GM12878 (cell line): ENCODE measurements at regions of chr10 and their contacts with region 1.

Region 1: GRCh38 chr10:102678842-102679289 is 34.6 kb downstream of the TRIM8 start:
- DNase-seq: no peak
- ATAC-seq: peak; percentile 82
- H3K4me3 ChIP-seq: no peak overlapping the region
- H3K27ac ChIP-seq: no peak overlapping the region
- H3K4me1 ChIP-seq: peaks cover 26% of the 10 kb centered on the region
- H3K27me3 ChIP-seq: no peaks in the 10 kb centered on the region
- CTCF ChIP-seq: peak; percentile 50 to 85 (median 74)
- EP300 ChIP-seq: no peak
- POLR2A ChIP-seq: no peak
- RAD21 ChIP-seq: peak; percentile 57

Region 2: GRCh38 chr10:102503281-102504220 is 175.3 kb before region 1 on chr10 and contains the start of gene SUFU:
- CTCF ChIA-PET with region 1: interaction called, 20 read pairs
- POLR2A ChIA-PET with region 1: interaction called, 4 read pairs
- RAD21 ChIA-PET with region 1: interaction called, 9 read pairs
- SMC1A ChIA-PET with region 1: interaction called, 4 read pairs
- in situ Hi-C with region 1: no loop called
- intact Hi-C with region 1: no loop called
- DNase-seq: peak; percentile 93
- ATAC-seq: peak; percentile 82
- H3K4me3 ChIP-seq: peak within 1 kb of the TSS; percentile 88
- H3K27ac ChIP-seq: peak within 1 kb of the TSS; percentile 72; the same call in 1 of the 2 replicates
- H3K4me1 ChIP-seq: peaks cover 7% of the 10 kb centered on the region
- H3K27me3 ChIP-seq: no peaks in the 10 kb centered on the region
- CTCF ChIP-seq: peak; percentile 82 to 98 (median 89); a peak in 5 of 6 replicates
- EP300 ChIP-seq: no peak
- POLR2A ChIP-seq: peak; percentile 92
- RAD21 ChIP-seq: peak; percentile 88
- polyA plus RNA-seq, gene SUFU: 0.68 to 0.84 TPM

Region 3: DNA sequence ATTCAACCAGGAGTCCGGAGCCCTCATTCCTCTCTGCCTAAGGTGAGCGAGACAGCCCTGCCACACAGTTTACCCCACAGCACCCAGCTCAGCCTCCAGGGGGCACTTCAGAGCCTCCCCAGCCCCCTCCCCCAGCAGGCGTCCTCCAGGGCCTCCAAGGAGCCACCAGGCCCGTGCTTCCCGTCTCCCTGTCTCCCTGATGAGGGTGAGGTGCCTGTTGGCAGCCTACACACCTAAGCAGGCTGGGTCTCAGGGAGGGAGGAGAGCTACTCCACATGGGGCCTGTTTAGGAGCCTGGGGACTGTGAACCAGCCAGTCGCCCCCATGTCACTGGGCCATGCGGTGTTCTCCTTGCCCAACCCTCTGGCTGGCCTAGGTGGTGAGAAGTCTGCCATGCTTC is 63.5 kb before region 1 on chr10:
- CTCF ChIA-PET with region 1: interaction called, 15 read pairs
- POLR2A ChIA-PET with region 1: no interaction called
- RAD21 ChIA-PET with region 1: interaction called, 3 read pairs
- SMC1A ChIA-PET with region 1: interaction called, 3 read pairs
- in situ Hi-C with region 1: no loop called
- intact Hi-C with region 1: no loop called
- DNase-seq: no peak
- ATAC-seq: peak; percentile 76
- H3K4me3 ChIP-seq: no peak overlapping the region
- H3K27ac ChIP-seq: no peak overlapping the region
- H3K4me1 ChIP-seq: 0 out of 2 replicates have a peak, but pooled peaks cover 3% of the 10 kb centered on the region
- H3K27me3 ChIP-seq: no peaks in the 10 kb centered on the region
- CTCF ChIP-seq: peak; percentile 17 to 35 (median 23); a peak in 3 of 6 replicates
- EP300 ChIP-seq: no peak
- POLR2A ChIP-seq: no peak
- RAD21 ChIP-seq: 0 out of 2 replicates have a peak, but pooled peaks have one; percentile 2

Region 4: DNA sequence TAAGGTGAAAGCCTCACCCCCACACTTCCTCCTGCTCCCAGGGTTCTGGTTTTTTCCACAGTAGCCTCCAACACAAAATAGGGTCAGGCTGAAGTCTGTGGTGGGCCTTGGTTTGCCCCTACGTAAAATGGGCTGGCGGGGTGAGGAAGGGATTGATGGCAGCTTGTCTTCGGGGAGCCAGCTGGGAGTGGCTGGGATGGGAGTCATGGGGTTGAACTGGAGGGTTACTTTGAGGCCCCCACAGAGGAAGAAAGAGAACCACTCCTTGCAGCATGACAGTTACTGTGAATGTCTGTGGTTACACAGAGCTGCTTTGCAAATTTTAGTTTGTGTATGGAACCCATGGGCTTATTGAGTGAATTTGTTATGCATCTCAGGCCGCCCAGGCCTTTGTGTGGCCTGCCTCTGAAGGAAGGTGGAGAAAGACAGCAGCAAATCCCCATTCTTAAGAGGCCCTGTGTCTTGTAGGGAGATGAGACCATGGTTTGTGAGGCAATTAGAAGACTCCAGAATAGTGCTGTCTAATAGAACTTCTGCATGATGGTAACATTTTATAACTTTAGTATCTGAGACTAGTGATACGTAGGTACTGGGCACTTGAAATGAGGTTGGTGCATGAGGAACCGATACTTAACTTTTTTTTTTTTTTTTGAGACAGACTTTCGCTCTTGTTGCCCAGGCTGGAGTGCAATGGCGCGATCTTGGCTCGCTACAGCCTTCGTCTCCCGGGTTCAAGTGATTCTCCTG is 26.5 kb before region 1 on chr10:
- CTCF ChIA-PET with region 1: interaction called, 128 read pairs
- POLR2A ChIA-PET with region 1: interaction called, 151 read pairs
- RAD21 ChIA-PET with region 1: interaction called, 81 read pairs
- SMC1A ChIA-PET with region 1: interaction called, 103 read pairs
- in situ Hi-C with region 1: no loop called
- intact Hi-C with region 1: no loop called
- DNase-seq: peak; percentile 75
- ATAC-seq: peak; percentile 61
- H3K4me3 ChIP-seq: peak overlapping the region; percentile 62
- H3K27ac ChIP-seq: peak overlapping the region; percentile 96
- H3K4me1 ChIP-seq: peaks cover 56% of the 10 kb centered on the region
- H3K27me3 ChIP-seq: no peaks in the 10 kb centered on the region
- CTCF ChIP-seq: no peak
- EP300 ChIP-seq: peak in 1 of 2 experiments; percentile 44; a peak in 2 of 4 replicates
- POLR2A ChIP-seq: no peak
- RAD21 ChIP-seq: no peak

Region 5: GRCh38 chr10:102691285-102692066 is 12.6 kb after region 1 on chr10:
- CTCF ChIA-PET with region 1: interaction called, 4 read pairs
- POLR2A ChIA-PET with region 1: interaction called, 4 read pairs
- RAD21 ChIA-PET with region 1: interaction called, 3 read pairs
- SMC1A ChIA-PET with region 1: interaction called, 32 read pairs
- in situ Hi-C with region 1: no loop called
- intact Hi-C with region 1: no loop called
- DNase-seq: no peak
- ATAC-seq: no peak
- H3K4me3 ChIP-seq: no peak overlapping the region
- H3K27ac ChIP-seq: no peak overlapping the region
- H3K4me1 ChIP-seq: no peaks in the 10 kb centered on the region
- H3K27me3 ChIP-seq: no peaks in the 10 kb centered on the region
- CTCF ChIP-seq: no peak
- EP300 ChIP-seq: no peak
- POLR2A ChIP-seq: no peak
- RAD21 ChIP-seq: no peak

Region 6: GRCh38 chr10:102713814-102714620 is 35.2 kb after region 1 on chr10 and contains the start of gene ARL3:
- CTCF ChIA-PET with region 1: interaction called, 114 read pairs
- POLR2A ChIA-PET with region 1: interaction called, 19 read pairs
- RAD21 ChIA-PET with region 1: interaction called, 140 read pairs
- SMC1A ChIA-PET with region 1: interaction called, 140 read pairs
- in situ Hi-C with region 1: no loop called
- intact Hi-C with region 1: loop called (anchors 2 kb)
- DNase-seq: peak; percentile 94
- ATAC-seq: peak; percentile 84
- H3K4me3 ChIP-seq: peak within 1 kb of the TSS; percentile 92
- H3K27ac ChIP-seq: peak within 1 kb of the TSS; percentile 88
- H3K4me1 ChIP-seq: peaks cover 17% of the 10 kb centered on the region
- H3K27me3 ChIP-seq: no peaks in the 10 kb centered on the region
- CTCF ChIP-seq: peak in 1 of 3 experiments; percentile 65; a peak in 2 of 6 replicates
- EP300 ChIP-seq: no peak
- POLR2A ChIP-seq: peak; percentile 74
- RAD21 ChIP-seq: peak; percentile 20; the same call in 1 of the 2 replicates
- polyA plus RNA-seq, gene ARL3: 21.0 to 26.1 TPM